B cell (primary cell): ENCODE measurements at regions of chr5 and their contacts with region 1.

Region 1: DNA sequence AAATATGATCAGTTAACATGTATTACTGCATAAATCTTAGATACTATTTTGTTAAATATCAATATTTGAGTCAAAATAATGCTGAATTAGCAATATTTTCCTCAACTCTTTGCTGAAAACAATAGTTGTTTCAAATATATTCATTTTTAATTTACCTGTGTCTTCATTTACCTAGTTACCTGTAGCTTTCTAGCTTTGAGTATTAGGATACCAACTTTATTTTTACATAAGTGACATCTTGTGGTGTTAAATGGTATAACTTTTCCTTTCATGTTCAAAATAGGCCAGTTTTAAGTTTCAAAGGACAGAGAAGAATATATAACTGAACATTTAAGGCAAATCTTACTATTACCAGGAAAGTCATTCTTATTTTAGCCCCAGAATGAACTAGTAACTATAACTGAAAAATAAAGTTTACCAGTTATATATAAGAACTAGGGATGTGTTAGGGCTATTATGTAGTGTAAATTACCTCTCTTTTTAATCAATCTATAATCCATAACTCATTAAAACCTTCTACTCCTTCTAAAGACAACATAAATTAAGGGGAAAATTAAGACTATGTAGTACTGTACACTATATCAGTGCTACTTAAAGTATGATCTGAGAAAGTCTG is 25.3 kb downstream of the AP3B1 start:
- DNase-seq: peak; percentile 50
- ATAC-seq: peak; percentile 54
- H3K4me3 ChIP-seq: no peak overlapping the region
- H3K4me3 Mint-ChIP-seq: no peak overlapping the region
- H3K27ac ChIP-seq: no peak overlapping the region
- H3K27ac Mint-ChIP-seq: no peak overlapping the region
- H3K4me1 ChIP-seq: peaks cover 3 to 16% of the 10 kb centered on the region in 2 donors
- H3K4me1 Mint-ChIP-seq: peaks cover 14% of the 10 kb centered on the region
- H3K27me3 ChIP-seq: no peaks in the 10 kb centered on the region
- H3K27me3 Mint-ChIP-seq: no peaks in the 10 kb centered on the region
- CTCF ChIP-seq: peak; percentile 80

Region 2: DNA sequence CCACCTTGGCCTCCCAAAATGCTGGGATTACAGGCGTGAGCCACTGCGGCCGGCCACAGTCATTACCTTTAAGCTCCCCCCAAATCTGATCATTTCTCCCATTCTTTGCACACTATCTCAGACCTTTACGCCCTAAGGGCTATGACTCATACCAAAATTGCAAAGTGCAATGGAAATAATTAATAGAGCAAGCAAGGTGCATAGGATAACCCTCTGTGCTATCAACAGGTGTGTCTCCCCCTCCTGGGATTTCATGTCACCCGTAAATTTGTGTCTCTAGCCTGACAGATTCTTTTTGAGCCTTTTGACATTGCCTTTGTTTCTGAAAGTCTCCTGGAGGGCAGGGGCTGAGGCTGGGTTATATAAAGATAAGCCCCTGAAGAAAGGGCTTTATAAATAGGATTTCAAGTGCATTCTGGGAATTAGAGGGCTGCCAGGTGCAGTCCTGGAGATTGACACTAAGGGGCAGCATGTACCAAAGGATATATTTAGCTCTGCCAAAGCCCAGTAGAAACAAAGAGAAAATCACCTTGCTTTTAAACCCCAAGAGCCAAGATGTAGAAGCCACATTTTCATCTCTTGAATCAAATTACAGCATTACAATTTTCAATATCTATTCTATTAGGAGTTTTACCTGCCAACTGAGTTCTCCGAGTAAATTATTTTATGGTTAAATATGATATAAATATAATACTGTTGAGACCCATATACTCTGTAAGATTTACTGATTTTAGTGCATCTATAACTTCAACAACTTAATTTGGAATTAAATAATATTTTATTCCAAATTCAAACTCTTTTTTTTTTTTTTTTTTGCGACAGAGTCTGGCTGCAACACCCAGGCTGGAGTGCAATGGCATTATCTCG is 1401.1 kb before region 1 on chr5:
- CTCF ChIA-PET with region 1: no interaction called
- POLR2A ChIA-PET with region 1: no interaction called
- intact Hi-C with region 1: loop called (anchors 5 kb)
- DNase-seq: peak; percentile 70
- ATAC-seq: peak; percentile 74
- H3K4me3 ChIP-seq: no peak overlapping the region
- H3K4me3 Mint-ChIP-seq: no peak overlapping the region
- H3K27ac ChIP-seq: no peak overlapping the region
- H3K27ac Mint-ChIP-seq: no peak overlapping the region
- H3K4me1 ChIP-seq: peaks cover 0 to 2% of the 10 kb centered on the region in 2 donors
- H3K4me1 Mint-ChIP-seq: no peaks in the 10 kb centered on the region
- H3K27me3 ChIP-seq: no peaks in the 10 kb centered on the region
- H3K27me3 Mint-ChIP-seq: no peaks in the 10 kb centered on the region
- CTCF ChIP-seq: peak; percentile 71

Region 3: DNA sequence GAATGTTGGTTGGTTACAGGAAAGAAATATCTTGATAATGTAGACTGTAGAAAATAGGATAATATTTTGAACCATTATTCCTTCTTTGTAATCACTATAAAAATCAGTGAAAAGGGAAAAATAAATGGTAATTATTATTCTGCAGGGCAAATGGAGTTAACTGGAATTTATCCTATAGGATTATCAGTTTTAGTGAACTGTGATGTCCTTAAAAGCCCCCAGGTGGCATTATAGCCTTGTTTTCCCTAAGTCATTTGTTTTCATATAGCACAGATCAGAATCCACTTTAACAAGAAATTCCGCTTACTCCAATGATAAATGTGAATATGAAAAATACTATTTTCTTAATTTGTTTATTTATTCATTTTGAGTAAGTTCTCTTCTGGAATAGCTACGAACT is 750.9 kb before region 1 on chr5:
- CTCF ChIA-PET with region 1: no interaction called
- POLR2A ChIA-PET with region 1: no interaction called
- intact Hi-C with region 1: loop called (anchors 5 kb)
- DNase-seq: no peak
- ATAC-seq: no peak
- H3K4me3 ChIP-seq: no peak overlapping the region
- H3K4me3 Mint-ChIP-seq: no peak overlapping the region
- H3K27ac ChIP-seq: no peak overlapping the region
- H3K27ac Mint-ChIP-seq: no peak overlapping the region
- H3K4me1 ChIP-seq: no peaks in the 10 kb centered on the region
- H3K4me1 Mint-ChIP-seq: no peaks in the 10 kb centered on the region
- H3K27me3 ChIP-seq: no peaks in the 10 kb centered on the region
- H3K27me3 Mint-ChIP-seq: peaks cover 20% of the 10 kb centered on the region
- CTCF ChIP-seq: no peak

Region 4: DNA sequence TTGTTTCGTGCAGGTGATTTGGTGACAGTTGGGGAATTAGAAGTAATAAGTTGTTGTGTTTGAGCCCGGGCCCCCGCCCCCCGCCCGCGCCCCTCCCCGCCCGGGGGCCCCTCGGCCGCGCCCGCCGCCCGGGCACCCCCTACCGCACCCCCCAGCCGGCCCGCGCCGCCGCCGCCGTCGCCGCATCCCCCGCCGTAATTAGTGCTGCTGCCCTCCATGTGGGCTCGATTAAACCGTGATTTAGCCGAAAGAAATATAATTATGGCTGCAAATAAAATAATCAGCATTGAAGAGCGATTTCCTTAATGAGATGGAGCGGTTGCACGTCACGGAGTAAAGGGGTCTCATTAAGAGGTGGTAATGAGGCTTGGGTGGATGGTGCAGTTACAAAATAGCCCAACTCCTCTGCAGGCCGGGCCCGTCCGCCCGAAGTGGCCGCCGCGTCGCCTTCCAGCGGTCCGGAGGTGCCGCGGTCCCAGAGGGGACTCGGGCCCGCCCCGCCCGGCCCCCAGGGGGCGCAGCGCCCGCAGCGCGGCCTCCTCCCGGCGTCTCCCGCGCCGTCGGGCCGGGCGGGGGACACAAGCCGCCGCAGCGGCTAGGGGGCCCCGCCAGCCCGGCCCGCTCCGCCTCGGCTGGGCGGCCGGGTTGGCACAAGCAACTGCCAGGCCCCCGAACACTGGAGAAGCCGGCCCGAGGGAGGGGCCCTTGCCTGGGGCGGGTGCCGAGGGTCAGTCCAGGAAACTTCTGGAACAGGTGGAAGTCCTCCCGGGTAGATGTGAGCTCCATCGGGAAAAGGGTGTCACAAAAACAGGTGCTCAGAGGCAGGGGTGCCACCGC is 623.8 kb before region 1 on chr5:
- CTCF ChIA-PET with region 1: interaction called, 4 read pairs
- POLR2A ChIA-PET with region 1: no interaction called
- intact Hi-C with region 1: loop called (anchors 10 kb)
- DNase-seq: peak; percentile 76
- ATAC-seq: peak; percentile 82
- H3K4me3 ChIP-seq: peak overlapping the region in 3 of 5 experiments; percentile 32 to 62 (median 51)
- H3K4me3 Mint-ChIP-seq: peak overlapping the region; percentile 82
- H3K27ac ChIP-seq: no peak overlapping the region
- H3K27ac Mint-ChIP-seq: no peak overlapping the region
- H3K4me1 ChIP-seq: peaks cover 28 to 50% of the 10 kb centered on the region in 2 donors
- H3K4me1 Mint-ChIP-seq: peaks cover 17% of the 10 kb centered on the region
- H3K27me3 ChIP-seq: peaks cover 2 to 89% (median 68%) of the 10 kb centered on the region in 4 experiments
- H3K27me3 Mint-ChIP-seq: peaks cover 88% of the 10 kb centered on the region
- CTCF ChIP-seq: peak; percentile 63

Region 5: GRCh38 chr5:78221964-78222451 is 47.2 kb before region 1 on chr5:
- CTCF ChIA-PET with region 1: interaction called, 21 read pairs
- POLR2A ChIA-PET with region 1: no interaction called
- intact Hi-C with region 1: loop called (anchors 1 kb)
- DNase-seq: peak; percentile 90
- ATAC-seq: peak; percentile 100
- H3K4me3 ChIP-seq: no peak overlapping the region
- H3K4me3 Mint-ChIP-seq: peak overlapping the region; percentile 4
- H3K27ac ChIP-seq: peak overlapping the region; percentile 29 to 33
- H3K27ac Mint-ChIP-seq: peak overlapping the region; percentile 85
- H3K4me1 ChIP-seq: peaks cover 8 to 10% of the 10 kb centered on the region in 2 donors
- H3K4me1 Mint-ChIP-seq: peaks cover 18% of the 10 kb centered on the region
- H3K27me3 ChIP-seq: no peaks in the 10 kb centered on the region
- H3K27me3 Mint-ChIP-seq: no peaks in the 10 kb centered on the region
- CTCF ChIP-seq: peak; percentile 67